Dorsolateral prefrontal cortex (tissue), 120 donors: ENCODE measurements at regions of chr13 and their contacts with region 1.

Region 1: GRCh38 chr13:31909864-31910551 is 121.6 kb upstream of the FRY start:
- DNase-seq: peak in 7 of 10 donors; percentile 27 to 68 (median 47)
- H3K4me3 ChIP-seq: no peak overlapping the region
- H3K27ac ChIP-seq: no peak overlapping the region
- H3K27me3 ChIP-seq: peaks cover 0 to 9% (median 0%) of the 10 kb centered on the region in 45 donors
- CTCF ChIP-seq: peak; percentile 74 to 99 (median 87)

Region 2: GRCh38 chr13:31846182-31846950 is 63.6 kb before region 1 on chr13:
- intact Hi-C with region 1: loop called in 1 of 2 experiments (anchors 5 kb)
- DNase-seq: peak; percentile 55 to 93 (median 83)
- H3K4me3 ChIP-seq: peak overlapping the region; percentile 54 to 86 (median 74)
- H3K27ac ChIP-seq: peak overlapping the region in 31 of 59 donors; percentile 7 to 82 (median 54)
- H3K27me3 ChIP-seq: peaks cover 0 to 12% (median 0%) of the 10 kb centered on the region in 45 donors
- CTCF ChIP-seq: peak in 4 of 56 donors; percentile 10 to 17 (median 10)

Region 3: GRCh38 chr13:32310134-32310706 is 400.2 kb after region 1 on chr13:
- intact Hi-C with region 1: loop called (anchors 5 to 10 kb)
- DNase-seq: peak in 1 of 10 donors; percentile 15
- H3K4me3 ChIP-seq: peak overlapping the region in 26 of 59 donors; percentile 1 to 41 (median 14)
- H3K27ac ChIP-seq: no peak overlapping the region
- H3K27me3 ChIP-seq: peaks cover 0 to 4% (median 0%) of the 10 kb centered on the region in 45 donors
- CTCF ChIP-seq: peak; percentile 47 to 85 (median 77)

Region 4: GRCh38 chr13:32581177-32581786 is 671.3 kb after region 1 on chr13:
- intact Hi-C with region 1: loop called in 1 of 2 experiments (anchors 5 kb)
- DNase-seq: no peak
- H3K4me3 ChIP-seq: no peak overlapping the region
- H3K27ac ChIP-seq: no peak overlapping the region
- H3K27me3 ChIP-seq: no peaks in the 10 kb centered on the region
- CTCF ChIP-seq: peak; percentile 42 to 84 (median 68)